ENCODE measurements at regions of chr17 and their contacts with region 1.

Region 1: DNA sequence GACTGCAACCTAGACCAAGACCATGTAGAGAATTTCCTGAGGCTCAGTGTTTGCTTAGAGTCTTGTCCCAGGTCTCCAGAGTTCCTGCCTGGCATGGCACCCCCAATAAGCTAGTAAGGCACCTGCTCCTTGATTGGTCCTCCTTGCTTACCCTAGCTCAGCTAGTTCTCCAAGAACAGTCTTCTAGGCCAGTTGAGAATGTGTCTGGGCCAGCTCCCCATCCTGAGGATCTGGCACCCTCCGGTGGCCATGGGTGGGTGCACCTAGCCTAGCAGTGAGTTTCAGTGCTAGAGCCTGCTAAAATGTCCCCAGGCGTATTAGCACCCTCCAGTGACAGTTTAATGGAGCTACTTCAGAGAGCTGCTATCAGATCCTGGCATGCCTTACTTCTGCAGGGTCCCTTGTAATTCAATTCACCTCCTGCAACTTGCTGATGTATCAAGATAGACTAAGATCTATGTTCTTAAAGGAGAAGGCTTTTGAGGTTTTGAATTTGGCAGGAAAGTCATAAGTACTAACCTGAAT is 44.4 kb upstream of the MED13 start:
- DNase-seq: peak; percentile 92
- ATAC-seq: peak; percentile 96 to 99
- H3K4me3 ChIP-seq: no peak overlapping the region
- H3K27ac ChIP-seq: 0 out of 6 replicates have a peak overlapping the region, but pooled peaks of 1 of the 2 experiments have one; percentile 6
- H3K4me1 ChIP-seq: peaks cover 26% of the 10 kb centered on the region
- CTCF ChIP-seq: peak; percentile 99
- EP300 ChIP-seq: no peak
- POLR2A ChIP-seq: no peak
- RAD21 ChIP-seq: peak; percentile 99 to 100

Region 2: DNA sequence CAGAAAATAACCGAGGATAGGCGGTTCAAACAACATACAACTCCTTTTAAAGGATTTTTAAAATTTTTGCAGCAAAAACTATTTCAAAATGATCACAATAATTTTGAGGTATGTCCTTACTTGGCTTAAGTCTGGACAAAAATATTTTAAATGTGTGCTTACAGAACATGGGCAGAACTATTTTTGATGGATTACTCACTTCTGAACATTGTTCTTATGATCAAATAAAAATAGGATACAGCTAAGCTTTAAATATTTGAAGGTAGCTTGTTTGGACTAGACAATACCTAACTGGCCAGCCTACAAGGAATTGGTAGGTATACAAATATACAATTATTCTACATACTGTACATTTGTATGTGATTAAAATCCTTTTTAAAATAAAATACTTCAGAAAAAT is 167.4 kb before region 1 on chr17:
- CTCF ChIA-PET with region 1: interaction called, 10 read pairs
- POLR2A ChIA-PET with region 1: no interaction called
- DNase-seq: no peak
- ATAC-seq: no peak
- H3K4me3 ChIP-seq: no peak overlapping the region
- H3K27ac ChIP-seq: no peak overlapping the region
- H3K4me1 ChIP-seq: 0 out of 3 replicates have a peak, but pooled peaks cover 5% of the 10 kb centered on the region
- CTCF ChIP-seq: no peak
- EP300 ChIP-seq: no peak
- POLR2A ChIP-seq: no peak
- RAD21 ChIP-seq: no peak

Region 3: DNA sequence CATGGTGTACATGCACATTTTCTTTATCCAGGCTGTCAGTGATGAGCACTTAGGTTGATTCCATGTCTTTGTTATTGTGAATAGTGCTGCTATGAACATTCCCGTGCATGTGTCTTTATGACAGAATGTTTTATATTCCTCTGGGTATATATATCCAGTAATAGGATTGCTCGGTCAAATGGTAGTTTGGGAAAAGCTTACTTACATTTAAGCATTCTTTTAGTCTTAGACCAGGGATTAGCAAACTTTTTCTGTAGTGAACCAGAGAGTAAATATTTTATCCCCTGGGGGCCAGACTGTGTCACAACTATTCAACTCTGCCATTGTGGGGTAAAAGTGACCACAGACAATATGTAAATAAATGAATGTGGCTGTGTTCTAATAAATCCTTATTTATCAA is 84.5 kb before region 1 on chr17:
- CTCF ChIA-PET with region 1: interaction called, 16 read pairs
- POLR2A ChIA-PET with region 1: no interaction called
- DNase-seq: no peak
- ATAC-seq: no peak
- H3K4me3 ChIP-seq: no peak overlapping the region
- H3K27ac ChIP-seq: no peak overlapping the region
- H3K4me1 ChIP-seq: no peaks in the 10 kb centered on the region
- CTCF ChIP-seq: no peak
- EP300 ChIP-seq: no peak
- POLR2A ChIP-seq: no peak
- RAD21 ChIP-seq: no peak

Region 4: GRCh38 chr17:62045109-62045905 is 64.1 kb before region 1 on chr17:
- CTCF ChIA-PET with region 1: interaction called, 15 read pairs
- POLR2A ChIA-PET with region 1: no interaction called
- DNase-seq: no peak
- ATAC-seq: no peak
- H3K4me3 ChIP-seq: no peak overlapping the region
- H3K27ac ChIP-seq: no peak overlapping the region
- H3K4me1 ChIP-seq: no peaks in the 10 kb centered on the region
- CTCF ChIP-seq: no peak
- EP300 ChIP-seq: no peak
- POLR2A ChIP-seq: no peak
- RAD21 ChIP-seq: no peak

Region 5: GRCh38 chr17:62075308-62075815 is 34.1 kb before region 1 on chr17:
- CTCF ChIA-PET with region 1: interaction called, 42 read pairs
- POLR2A ChIA-PET with region 1: no interaction called
- DNase-seq: no peak
- ATAC-seq: peak; percentile 26 to 34; a peak in 2 of 6 replicates
- H3K4me3 ChIP-seq: no peak overlapping the region
- H3K27ac ChIP-seq: no peak overlapping the region
- H3K4me1 ChIP-seq: no peaks in the 10 kb centered on the region
- CTCF ChIP-seq: no peak
- EP300 ChIP-seq: no peak
- POLR2A ChIP-seq: no peak
- RAD21 ChIP-seq: no peak

Region 6: GRCh38 chr17:62121025-62121730 is 11.7 kb after region 1 on chr17:
- CTCF ChIA-PET with region 1: interaction called, 23 read pairs
- POLR2A ChIA-PET with region 1: no interaction called
- DNase-seq: no peak
- ATAC-seq: no peak
- H3K4me3 ChIP-seq: no peak overlapping the region
- H3K27ac ChIP-seq: no peak overlapping the region
- H3K4me1 ChIP-seq: no peaks in the 10 kb centered on the region
- CTCF ChIP-seq: no peak
- EP300 ChIP-seq: no peak
- POLR2A ChIP-seq: no peak
- RAD21 ChIP-seq: no peak

Region 7: GRCh38 chr17:62145876-62146275 is 36.4 kb after region 1 on chr17:
- CTCF ChIA-PET with region 1: interaction called, 13 read pairs
- POLR2A ChIA-PET with region 1: no interaction called
- DNase-seq: no peak
- ATAC-seq: no peak
- H3K4me3 ChIP-seq: no peak overlapping the region
- H3K27ac ChIP-seq: no peak overlapping the region
- H3K4me1 ChIP-seq: no peaks in the 10 kb centered on the region; the same call in 2 of the 3 replicates
- CTCF ChIP-seq: no peak
- EP300 ChIP-seq: no peak
- POLR2A ChIP-seq: no peak
- RAD21 ChIP-seq: no peak